Right ventricle myocardium inferior (tissue), 1 donor: ENCODE measurements at regions of chr5 and their contacts with region 1.

Region 1: GRCh38 chr5:159100025-159100781 is 487 bp upstream of the EBF1 start:
- DNase-seq: peak; percentile 95
- ATAC-seq: peak; percentile 89

Region 2: DNA sequence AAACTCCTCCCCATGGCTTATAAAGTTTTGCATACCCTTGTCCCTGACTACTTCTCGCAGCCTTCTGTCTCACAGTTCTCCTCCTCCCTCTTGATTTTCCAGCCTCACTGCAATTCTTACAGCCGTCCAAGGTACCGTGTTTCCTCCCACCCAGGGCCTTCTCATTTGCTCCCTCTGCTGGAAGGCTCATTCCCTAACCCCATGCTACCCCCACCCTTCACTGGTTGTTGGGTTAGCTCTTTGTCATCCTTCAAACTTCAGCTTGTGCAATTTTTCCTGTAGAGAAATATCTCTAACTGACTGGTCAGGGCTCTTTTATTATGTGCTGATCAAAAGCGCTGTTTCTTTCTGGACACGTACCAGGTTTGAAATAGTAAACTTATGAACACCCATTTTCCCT is 329.7 kb before region 1 on chr5:
- intact Hi-C with region 1: loop called (anchors 10 kb)
- DNase-seq: no peak
- ATAC-seq: no peak

Region 3: DNA sequence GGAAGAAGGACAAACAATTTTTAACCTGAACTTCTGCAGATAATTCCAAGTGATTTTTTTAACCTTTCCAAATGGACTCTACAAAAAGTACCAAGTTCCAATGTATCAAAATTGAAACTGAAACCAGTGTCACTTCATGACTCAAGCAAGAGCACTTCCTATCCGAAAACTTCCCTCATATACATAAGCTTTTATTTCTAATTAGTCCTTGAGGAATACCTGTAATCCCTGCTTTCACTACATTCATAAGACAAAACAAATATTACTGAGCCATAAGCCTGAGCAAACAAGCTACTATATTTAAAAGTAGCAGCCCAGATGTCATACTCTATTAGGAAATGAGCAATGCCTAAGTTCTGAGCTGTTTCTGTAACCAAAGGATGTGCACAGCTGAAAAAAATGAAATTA is 224.9 kb before region 1 on chr5:
- intact Hi-C with region 1: loop called (anchors 10 kb)
- DNase-seq: no peak
- ATAC-seq: no peak

Region 4: DNA sequence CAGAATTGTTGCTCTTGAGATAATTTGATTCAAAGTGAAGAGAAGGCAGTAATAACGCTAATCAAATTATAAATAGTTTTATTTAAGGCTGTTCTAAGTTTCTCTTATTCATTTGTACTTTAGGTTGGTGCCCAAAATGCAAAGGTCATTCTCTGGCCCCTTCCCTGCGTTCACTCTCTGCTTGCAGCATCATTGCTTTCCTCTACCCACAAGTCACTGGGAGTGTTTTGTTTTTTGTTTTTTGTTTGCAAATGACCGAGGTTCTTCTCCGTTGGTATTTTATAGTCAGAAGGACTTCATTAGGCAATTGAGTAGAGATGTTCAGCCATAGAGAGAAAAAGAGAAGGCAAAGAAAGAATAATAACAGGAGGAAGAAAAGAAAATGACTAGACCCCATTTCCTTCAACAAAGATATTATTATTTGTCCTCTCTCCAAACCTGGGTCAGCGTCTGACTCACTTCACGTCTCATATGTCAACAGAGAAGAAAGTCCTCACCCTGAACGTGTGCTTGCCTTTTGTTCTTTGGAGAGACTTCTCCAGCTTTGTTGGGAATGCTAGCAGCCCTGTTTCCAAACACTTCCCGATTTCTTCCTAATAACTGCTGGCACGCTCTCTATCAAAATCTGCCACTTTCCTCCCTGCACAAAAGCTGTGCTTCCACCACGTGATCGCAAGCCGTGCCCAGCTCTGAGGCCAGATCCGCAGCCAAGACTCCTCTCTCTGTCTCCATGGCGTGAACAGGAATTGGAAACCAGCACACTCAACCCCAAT is 120.3 kb before region 1 on chr5:
- intact Hi-C with region 1: loop called (anchors 5 kb)
- DNase-seq: peak; percentile 75
- ATAC-seq: peak; percentile 86

Region 5: DNA sequence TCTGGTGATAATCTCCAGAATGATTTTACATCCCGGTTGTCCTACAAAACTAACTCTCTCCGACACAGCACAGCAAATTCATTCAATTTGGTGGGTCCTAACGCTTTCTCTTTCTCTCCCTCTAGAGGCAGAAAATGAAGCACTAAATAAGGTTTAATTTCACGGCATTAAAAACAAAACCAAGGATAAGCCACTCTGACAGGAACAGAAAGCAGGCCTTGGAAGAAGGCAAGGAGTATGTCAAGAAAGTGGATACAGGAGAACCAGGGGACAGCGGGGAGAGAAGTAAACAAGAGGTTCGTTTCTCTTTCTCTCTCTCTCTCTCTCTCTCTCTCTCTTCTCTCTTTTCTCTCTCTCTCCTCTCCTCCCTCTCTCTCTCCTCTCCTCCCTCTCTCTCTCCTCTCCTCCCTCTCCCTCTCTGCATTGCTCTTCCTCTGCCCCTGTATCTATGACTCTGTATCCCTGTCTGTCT is 50.3 kb before region 1 on chr5:
- intact Hi-C with region 1: loop called (anchors 2 kb)
- DNase-seq: no peak
- ATAC-seq: peak; percentile 68

Region 6: DNA sequence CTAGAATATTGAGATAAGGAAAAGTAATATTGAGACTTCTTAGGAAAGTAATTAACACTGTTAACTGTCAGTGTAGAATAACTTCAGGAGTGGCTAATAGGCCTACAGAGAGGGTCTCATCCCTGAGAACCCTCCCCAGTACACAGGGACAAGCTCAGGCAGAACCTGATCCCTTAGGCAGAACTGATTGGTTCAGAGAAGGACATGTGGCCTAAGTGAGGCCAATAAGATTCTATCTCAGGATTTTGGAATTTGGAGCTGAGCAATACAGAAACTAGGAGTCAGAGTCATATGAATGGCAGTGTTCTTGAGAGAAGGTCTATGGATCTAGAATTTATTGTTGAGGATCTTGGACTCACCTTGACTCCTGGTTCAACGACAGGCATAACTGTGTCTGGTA is 152.0 kb after region 1 on chr5:
- intact Hi-C with region 1: no loop called
- DNase-seq: no peak
- ATAC-seq: no peak